ENCODE measurements at regions of chr16 and their contacts with region 1.

Region 1: GRCh38 chr16:48609652-48610029 is 339 bp downstream of the N4BP1 start:
- DNase-seq: no peak
- ATAC-seq: peak; percentile 68
- H3K4me3 ChIP-seq: peak overlapping the region; percentile 79 to 97 (median 95)
- H3K27ac ChIP-seq: peak overlapping the region; percentile 96
- H3K4me1 ChIP-seq: peaks cover 86% of the 10 kb centered on the region
- H3K27me3 ChIP-seq: no peaks in the 10 kb centered on the region; a peak in 1 of 5 replicates
- CTCF ChIP-seq: no peak
- EP300 ChIP-seq: no peak
- POLR2A ChIP-seq: no peak
- RAD21 ChIP-seq: peak; percentile 57; the same call in 1 of the 2 replicates

Region 2: GRCh38 chr16:48535831-48536613 is 73.6 kb before region 1 on chr16:
- CTCF ChIA-PET with region 1: no interaction called
- POLR2A ChIA-PET with region 1: no interaction called
- in situ Hi-C with region 1: loop called (anchors 5 kb)
- intact Hi-C with region 1: no loop called
- DNase-seq: peak; percentile 21
- ATAC-seq: peak; percentile 5
- H3K4me3 ChIP-seq: no peak overlapping the region
- H3K27ac ChIP-seq: no peak overlapping the region
- H3K4me1 ChIP-seq: peaks cover 39% of the 10 kb centered on the region
- H3K27me3 ChIP-seq: no peaks in the 10 kb centered on the region
- CTCF ChIP-seq: no peak
- EP300 ChIP-seq: no peak
- POLR2A ChIP-seq: no peak
- RAD21 ChIP-seq: no peak

Region 3: GRCh38 chr16:48559462-48560211 is 50.0 kb before region 1 on chr16:
- CTCF ChIA-PET with region 1: no interaction called
- POLR2A ChIA-PET with region 1: interaction called, 3 read pairs
- in situ Hi-C with region 1: no loop called
- intact Hi-C with region 1: loop called (anchors 5 kb)
- DNase-seq: no peak
- ATAC-seq: no peak
- H3K4me3 ChIP-seq: no peak overlapping the region
- H3K27ac ChIP-seq: peak overlapping the region; percentile 14
- H3K4me1 ChIP-seq: peaks cover 59% of the 10 kb centered on the region
- H3K27me3 ChIP-seq: no peaks in the 10 kb centered on the region
- CTCF ChIP-seq: no peak
- EP300 ChIP-seq: no peak
- POLR2A ChIP-seq: no peak
- RAD21 ChIP-seq: no peak